Heart left ventricle (tissue), 16 donors: ENCODE measurements at regions of chr20 and their contacts with region 1.

Region 1: GRCh38 chr20:48620519-48621254 is 207.1 kb downstream of the PREX1 start:
- DNase-seq: peak; percentile 84 to 91 (median 86)
- ATAC-seq: peak; percentile 88 to 95 (median 94)
- H3K4me3 ChIP-seq: peak overlapping the region in 9 of 12 donors; percentile 1 to 55 (median 37)
- H3K27ac ChIP-seq: no peak overlapping the region
- H3K4me1 ChIP-seq: peaks cover 0 to 27% (median 15%) of the 10 kb centered on the region in 12 donors
- H3K27me3 ChIP-seq: no peaks in the 10 kb centered on the region
- CTCF ChIP-seq: peak in 11 of 12 donors; percentile 74 to 90 (median 81)
- POLR2A ChIP-seq: no peak

Region 2: GRCh38 chr20:46757754-46758678 is 1862.7 kb before region 1 on chr20:
- intact Hi-C with region 1: loop called in 1 of 10 experiments (anchors 10 kb)
- DNase-seq: peak in 4 of 5 donors; percentile 10 to 40 (median 38)
- ATAC-seq: peak in 3 of 4 donors; percentile 42 to 54 (median 51)
- H3K4me3 ChIP-seq: no peak overlapping the region
- H3K27ac ChIP-seq: no peak overlapping the region
- H3K4me1 ChIP-seq: peaks cover 0 to under 1% (median 0%) of the 10 kb centered on the region in 12 donors
- H3K27me3 ChIP-seq: peaks cover 0 to 7% (median 0%) of the 10 kb centered on the region in 9 donors
- CTCF ChIP-seq: peak; percentile 82 to 95 (median 90)
- POLR2A ChIP-seq: no peak

Region 3: DNA sequence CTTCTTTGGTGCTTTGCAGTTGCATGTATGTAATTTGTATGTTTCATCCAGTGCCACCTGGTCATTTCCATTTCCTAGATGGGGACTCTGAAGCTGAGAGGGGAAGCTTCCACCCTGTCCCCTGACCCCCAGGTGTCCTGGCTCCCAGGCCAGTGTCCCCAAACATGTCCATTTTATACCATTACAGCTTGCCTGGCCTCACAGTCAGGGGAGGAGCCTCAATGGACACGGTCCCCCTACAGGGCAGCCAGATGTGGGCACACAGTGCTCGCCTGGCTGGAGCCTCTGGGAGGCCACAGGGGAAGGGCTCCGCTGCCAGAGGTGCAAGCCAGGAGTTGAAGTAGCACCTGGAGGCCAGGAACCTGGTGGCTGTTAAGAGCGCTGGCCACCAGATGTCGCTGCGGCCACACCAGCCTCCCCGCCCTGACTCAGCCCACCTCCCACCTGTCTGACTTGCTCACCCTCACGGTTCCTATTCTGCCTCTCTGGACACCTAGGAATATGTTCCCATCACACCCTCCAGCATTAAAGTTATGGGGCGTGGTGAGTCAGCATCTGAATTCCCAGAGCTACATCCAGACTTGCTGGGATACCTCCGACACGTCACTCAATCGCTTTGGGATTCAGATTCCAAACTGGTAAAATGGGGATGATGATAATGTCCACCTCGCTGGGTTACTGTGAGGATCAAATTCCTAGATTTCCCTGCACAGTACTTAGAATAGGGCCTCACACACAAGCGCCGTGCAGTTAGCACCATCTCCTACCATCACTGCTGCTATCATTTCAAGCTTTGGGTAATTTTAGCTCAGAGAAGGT is 942.8 kb before region 1 on chr20:
- intact Hi-C with region 1: loop called (anchors 1 to 5 kb)
- DNase-seq: no peak
- ATAC-seq: no peak
- H3K4me3 ChIP-seq: no peak overlapping the region
- H3K27ac ChIP-seq: no peak overlapping the region
- H3K4me1 ChIP-seq: peaks cover 0 to 26% (median 16%) of the 10 kb centered on the region in 12 donors
- H3K27me3 ChIP-seq: no peaks in the 10 kb centered on the region
- CTCF ChIP-seq: peak; percentile 62 to 82 (median 72)
- POLR2A ChIP-seq: peak in 1 of 2 donors; percentile 23

Region 4: DNA sequence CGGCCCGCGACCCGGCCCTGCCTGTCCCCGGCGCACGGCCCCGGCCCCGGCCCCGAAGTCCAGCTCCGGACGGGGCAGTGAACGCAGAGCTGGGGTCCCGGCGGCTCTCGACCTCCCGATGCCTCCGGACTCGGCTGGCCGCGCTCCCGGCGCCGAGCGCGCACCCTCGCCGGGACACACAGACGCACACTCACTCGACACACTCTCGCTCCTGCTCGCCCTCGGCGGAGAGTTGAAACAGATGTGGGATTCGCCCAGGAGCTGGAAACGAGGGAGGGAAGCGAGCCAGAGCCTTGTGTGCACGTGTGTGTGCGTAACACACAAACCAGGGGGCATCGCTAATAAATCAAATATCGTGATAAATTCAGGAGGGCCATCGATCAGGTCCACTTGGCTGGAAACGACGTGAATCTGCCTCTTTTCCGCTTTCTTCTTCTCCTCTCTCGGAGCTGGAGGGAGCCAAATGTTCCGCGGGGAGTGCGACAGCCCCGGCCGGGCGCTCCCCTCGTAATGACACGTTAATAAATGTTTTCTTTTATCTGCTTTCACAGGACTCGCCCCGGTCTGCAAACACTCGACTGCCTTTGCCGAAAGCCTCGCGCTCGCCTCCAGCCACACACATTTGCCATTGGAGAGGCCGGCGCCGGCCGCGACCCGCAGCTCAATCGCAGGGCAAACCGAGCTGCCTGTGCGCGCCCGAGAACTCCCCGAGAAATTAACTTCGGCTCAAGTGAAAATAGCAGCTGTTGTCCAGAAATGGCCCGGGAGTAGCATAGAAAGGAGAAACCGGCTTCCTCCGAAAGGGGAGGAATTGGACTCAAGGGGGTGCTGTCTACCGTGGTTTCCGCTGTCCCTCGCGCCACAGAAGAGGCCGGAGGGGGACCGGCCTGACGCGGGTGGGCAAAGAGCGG is 834.6 kb before region 1 on chr20:
- intact Hi-C with region 1: loop called (anchors 1 to 5 kb)
- DNase-seq: peak; percentile 56 to 82 (median 77)
- ATAC-seq: peak; percentile 70 to 93 (median 86)
- H3K4me3 ChIP-seq: peak overlapping the region; percentile 28 to 88 (median 66)
- H3K27ac ChIP-seq: peak overlapping the region; percentile 26 to 87 (median 78)
- H3K4me1 ChIP-seq: peaks cover 0 to 34% (median 18%) of the 10 kb centered on the region in 12 donors
- H3K27me3 ChIP-seq: peaks cover 0 to 36% (median 7%) of the 10 kb centered on the region in 9 donors
- CTCF ChIP-seq: peak; percentile 51 to 87 (median 73)
- POLR2A ChIP-seq: no peak

Region 5: DNA sequence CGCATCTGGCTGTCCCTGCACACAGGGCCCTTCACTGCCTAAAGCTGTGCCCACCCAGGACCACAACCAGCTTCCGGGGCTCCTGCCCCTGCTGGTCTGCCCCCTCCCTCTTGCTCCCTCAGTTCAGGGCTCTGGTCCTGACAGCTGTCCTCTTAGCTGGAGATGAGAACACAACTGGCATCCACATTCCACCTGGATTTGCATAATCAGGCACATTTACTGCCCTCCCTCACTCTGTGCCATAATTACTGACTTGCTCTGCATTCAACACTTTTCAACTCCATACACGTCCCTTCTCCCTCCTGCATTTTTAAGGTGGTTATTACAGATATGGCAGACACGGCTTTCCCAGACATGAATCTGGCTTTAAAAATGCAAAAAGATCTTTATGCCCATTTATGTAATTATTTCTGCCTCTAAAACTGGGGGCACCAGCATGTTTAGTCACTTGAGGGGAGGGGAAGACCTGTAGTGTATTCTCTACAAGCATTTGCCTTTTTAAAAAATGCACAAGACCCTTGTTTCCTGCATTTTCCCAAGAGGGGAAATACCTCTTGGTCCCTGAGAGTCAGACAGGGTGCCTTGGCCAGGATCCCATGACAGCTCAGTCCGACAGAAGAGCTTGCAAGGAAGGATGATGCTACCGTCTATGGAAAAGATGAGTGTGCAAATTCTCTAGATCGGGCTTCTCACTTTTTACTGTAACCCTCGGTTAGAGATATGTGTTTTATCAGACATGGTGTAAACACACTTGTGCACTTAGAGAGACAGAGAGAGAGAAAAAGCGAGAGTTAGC is 194.7 kb before region 1 on chr20:
- intact Hi-C with region 1: loop called in 1 of 10 experiments (anchors 5 kb)
- DNase-seq: no peak
- ATAC-seq: no peak
- H3K4me3 ChIP-seq: no peak overlapping the region
- H3K27ac ChIP-seq: no peak overlapping the region
- H3K4me1 ChIP-seq: no peaks in the 10 kb centered on the region
- H3K27me3 ChIP-seq: peaks cover 0 to 6% (median 0%) of the 10 kb centered on the region in 9 donors
- CTCF ChIP-seq: no peak
- POLR2A ChIP-seq: no peak

Region 6: GRCh38 chr20:48502850-48503815 is 117.6 kb before region 1 on chr20:
- intact Hi-C with region 1: no loop called
- DNase-seq: no peak
- ATAC-seq: no peak
- H3K4me3 ChIP-seq: no peak overlapping the region
- H3K27ac ChIP-seq: no peak overlapping the region
- H3K4me1 ChIP-seq: no peaks in the 10 kb centered on the region
- H3K27me3 ChIP-seq: no peaks in the 10 kb centered on the region
- CTCF ChIP-seq: no peak
- POLR2A ChIP-seq: no peak

Region 7: GRCh38 chr20:48635433-48636310 is 15.0 kb after region 1 on chr20:
- intact Hi-C with region 1: no loop called
- DNase-seq: peak; percentile 37 to 79 (median 48)
- ATAC-seq: peak; percentile 33 to 77 (median 58)
- H3K4me3 ChIP-seq: no peak overlapping the region
- H3K27ac ChIP-seq: no peak overlapping the region
- H3K4me1 ChIP-seq: no peaks in the 10 kb centered on the region
- H3K27me3 ChIP-seq: no peaks in the 10 kb centered on the region
- CTCF ChIP-seq: peak; percentile 57 to 85 (median 72)
- POLR2A ChIP-seq: no peak

Region 8: GRCh38 chr20:48656534-48657358 is 36.1 kb after region 1 on chr20:
- intact Hi-C with region 1: no loop called
- DNase-seq: peak in 1 of 5 donors; percentile 16
- ATAC-seq: no peak
- H3K4me3 ChIP-seq: no peak overlapping the region
- H3K27ac ChIP-seq: no peak overlapping the region
- H3K4me1 ChIP-seq: peaks cover 0 to 8% (median 0%) of the 10 kb centered on the region in 12 donors
- H3K27me3 ChIP-seq: no peaks in the 10 kb centered on the region
- CTCF ChIP-seq: no peak
- POLR2A ChIP-seq: no peak

Region 9: DNA sequence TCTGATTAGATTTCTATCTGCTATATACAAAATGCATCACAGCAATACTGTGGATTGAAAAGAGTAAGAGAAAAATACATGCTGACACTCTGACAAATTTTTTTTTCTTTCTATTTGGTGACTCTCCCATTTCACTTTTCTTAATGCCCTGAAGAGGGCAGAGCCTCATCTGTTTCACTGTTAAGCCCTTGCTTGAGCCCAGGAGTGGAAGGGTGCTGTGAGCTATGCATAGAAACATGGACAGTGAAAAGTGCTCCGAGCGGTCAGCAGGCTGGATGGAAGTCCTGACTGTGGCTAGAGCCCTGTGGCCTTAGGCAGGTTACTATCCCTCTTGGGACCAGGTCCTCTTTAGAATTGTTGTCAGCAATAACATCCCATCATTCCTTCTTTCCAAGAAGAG is 408.0 kb after region 1 on chr20:
- intact Hi-C with region 1: no loop called
- DNase-seq: no peak
- ATAC-seq: peak in 3 of 4 donors; percentile 37 to 69 (median 48)
- H3K4me3 ChIP-seq: no peak overlapping the region
- H3K27ac ChIP-seq: no peak overlapping the region
- H3K4me1 ChIP-seq: no peaks in the 10 kb centered on the region
- H3K27me3 ChIP-seq: no peaks in the 10 kb centered on the region
- CTCF ChIP-seq: peak in 5 of 12 donors; percentile 12 to 35 (median 31)
- POLR2A ChIP-seq: no peak